Caki2 (cell line): ENCODE measurements at regions of chr2 and their contacts with region 1.

Region 1: GRCh38 chr2:208531361-208531760 is 124.8 kb downstream of the PTH2R start:
- DNase-seq: no peak

Region 2: GRCh38 chr2:208479342-208479741 is 52.0 kb before region 1 on chr2:
- in situ Hi-C with region 1: loop called (anchors 10 kb)
- DNase-seq: peak; percentile 43

Region 3: DNA sequence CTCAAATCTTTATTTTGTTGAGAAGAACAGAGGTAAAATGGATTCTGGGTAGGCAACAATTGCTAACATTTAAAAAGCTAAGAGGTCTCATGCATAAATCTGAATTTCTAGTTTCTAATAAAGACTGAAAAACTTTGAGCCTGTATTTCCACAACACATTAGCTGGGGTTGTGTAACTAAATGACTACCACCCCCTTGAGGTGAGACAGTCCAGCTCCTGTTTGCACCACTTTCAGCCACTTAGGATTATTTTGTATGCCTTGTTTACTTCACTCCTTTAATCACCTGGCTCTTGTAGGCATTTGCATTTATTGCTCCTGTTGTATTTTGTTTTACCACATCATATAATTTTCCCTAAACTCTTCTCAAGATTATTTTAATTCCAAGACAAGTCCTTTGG is 251.8 kb after region 1 on chr2:
- in situ Hi-C with region 1: no loop called
- DNase-seq: no peak